Mammary epithelial cell (primary cell): ENCODE measurements at regions of chr12 and their contacts with region 1.

Region 1: GRCh38 chr12:26126340-26127284 is 1.8 kb upstream of the BHLHE41 start:
- DNase-seq: peak; percentile 89
- H3K4me3 ChIP-seq: peak overlapping the region; percentile 63 to 90 (median 88)
- H3K27ac ChIP-seq: peak overlapping the region; percentile 94
- H3K4me1 ChIP-seq: peaks cover 25% of the 10 kb centered on the region
- H3K27me3 ChIP-seq: no peaks in the 10 kb centered on the region
- CTCF ChIP-seq: peak in 1 of 2 donors; percentile 24

Region 2: DNA sequence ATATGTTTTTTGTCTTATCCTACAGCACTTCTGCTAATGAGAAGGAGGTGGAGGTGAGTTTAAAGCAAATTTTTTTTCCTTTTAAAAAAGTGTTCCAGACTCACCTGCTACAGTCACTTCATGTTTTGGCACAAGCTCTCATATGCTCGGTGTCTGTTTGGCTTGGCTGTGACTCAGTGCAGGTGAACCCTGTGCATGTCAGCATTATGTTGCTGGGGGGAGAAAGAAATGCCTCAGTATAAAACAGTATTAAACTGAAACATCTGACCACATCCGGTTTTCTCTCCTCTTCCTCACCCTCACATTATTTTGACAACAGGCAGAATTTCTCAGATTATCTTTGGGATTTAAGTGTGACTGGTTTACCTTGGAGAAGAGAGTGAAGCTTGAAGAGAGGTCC is 1036.9 kb before region 1 on chr12:
- CTCF ChIA-PET with region 1: no interaction called
- dilution Hi-C with region 1: no loop called
- in situ Hi-C with region 1: no loop called
- intact Hi-C with region 1: no loop called
- DNase-seq: peak; percentile 73
- H3K4me3 ChIP-seq: no peak overlapping the region
- H3K27ac ChIP-seq: no peak overlapping the region
- H3K4me1 ChIP-seq: peaks cover 9% of the 10 kb centered on the region
- H3K27me3 ChIP-seq: no peaks in the 10 kb centered on the region
- CTCF ChIP-seq: no peak

Region 3: DNA sequence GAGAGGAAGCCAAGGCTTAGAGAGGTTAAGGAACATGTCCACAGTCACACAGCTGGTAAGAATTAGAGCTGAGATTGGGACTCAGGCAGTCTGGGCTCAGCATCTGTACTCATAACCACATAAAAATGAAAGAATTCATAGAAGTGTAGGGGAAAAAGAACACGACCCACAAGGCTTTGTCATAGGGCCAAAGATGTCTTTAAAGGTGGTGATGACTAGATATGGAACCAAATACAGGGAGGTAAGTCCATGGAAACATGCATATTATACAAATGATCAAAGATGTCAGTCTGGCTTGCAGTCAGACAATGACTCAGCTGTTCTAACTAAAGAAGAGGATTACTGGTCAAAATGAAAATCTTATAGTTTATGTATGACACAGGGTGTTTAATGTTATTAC is 61.5 kb after region 1 on chr12:
- CTCF ChIA-PET with region 1: no interaction called
- dilution Hi-C with region 1: no loop called
- in situ Hi-C with region 1: no loop called
- intact Hi-C with region 1: loop called (anchors 5 kb)
- DNase-seq: peak; percentile 74
- H3K4me3 ChIP-seq: no peak overlapping the region
- H3K27ac ChIP-seq: peak overlapping the region; percentile 41
- H3K4me1 ChIP-seq: peaks cover 33% of the 10 kb centered on the region
- H3K27me3 ChIP-seq: no peaks in the 10 kb centered on the region
- CTCF ChIP-seq: no peak

Region 4: DNA sequence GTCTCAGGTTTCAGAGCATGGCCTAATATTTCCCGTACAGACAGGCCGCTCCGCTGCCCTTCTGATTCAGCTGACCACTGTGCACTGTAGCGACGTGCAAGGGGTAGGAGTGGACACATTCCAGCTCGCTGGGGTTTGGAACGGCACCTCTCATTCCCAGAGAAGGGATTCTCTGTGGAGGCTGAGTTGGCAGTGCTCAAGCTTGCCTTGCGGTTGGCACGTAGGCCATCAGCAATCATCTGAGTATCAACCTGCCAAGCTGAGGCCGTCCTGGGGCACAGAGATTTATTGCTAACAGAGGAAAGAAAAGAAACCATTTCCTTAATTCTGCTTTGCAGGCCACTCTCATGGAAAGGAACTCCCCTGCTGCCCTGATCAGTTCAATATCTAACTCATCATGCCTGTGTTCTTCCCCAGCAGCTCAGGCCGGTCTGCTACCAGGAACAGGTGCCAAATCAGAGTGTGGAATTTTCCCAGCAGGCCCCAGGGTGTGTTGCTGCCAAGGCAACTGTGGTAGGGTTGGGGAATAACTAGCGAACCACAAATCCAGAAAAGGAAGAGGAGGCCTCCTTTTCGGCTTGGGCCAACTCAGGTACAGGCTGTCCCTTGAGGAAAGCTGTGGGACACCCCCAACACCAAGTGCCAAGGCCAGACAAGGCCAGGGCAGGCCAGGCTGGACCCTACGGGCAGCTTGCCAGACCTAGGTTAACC is 161.2 kb after region 1 on chr12:
- CTCF ChIA-PET with region 1: no interaction called
- dilution Hi-C with region 1: loop called (anchors 5 kb)
- in situ Hi-C with region 1: loop called in 1 of 2 experiments (anchors 10 kb)
- intact Hi-C with region 1: no loop called
- DNase-seq: peak; percentile 99
- H3K4me3 ChIP-seq: no peak overlapping the region
- H3K27ac ChIP-seq: peak overlapping the region; percentile 96
- H3K4me1 ChIP-seq: peaks cover 44% of the 10 kb centered on the region
- H3K27me3 ChIP-seq: no peaks in the 10 kb centered on the region
- CTCF ChIP-seq: no peak

Region 5: DNA sequence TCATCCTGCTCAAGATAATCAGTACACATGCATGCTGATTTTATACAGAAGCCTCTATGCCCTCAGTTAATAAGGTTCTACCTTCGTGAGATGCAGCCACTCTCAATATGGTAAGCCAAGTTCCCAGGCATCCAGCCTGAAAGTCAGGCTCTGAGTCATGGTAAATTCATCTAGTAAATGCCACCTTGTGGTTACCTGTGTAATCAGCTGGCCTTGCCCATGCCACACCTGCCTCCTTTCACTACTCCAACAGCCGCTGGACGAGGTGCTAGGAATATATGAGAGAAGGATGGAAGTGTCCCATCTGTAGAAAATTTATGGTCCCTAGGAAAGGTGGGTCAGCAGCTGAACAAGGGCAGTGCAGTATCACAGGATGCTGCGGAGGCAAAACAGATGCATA is 276.0 kb after region 1 on chr12:
- CTCF ChIA-PET with region 1: interaction called, 4 read pairs
- dilution Hi-C with region 1: no loop called
- in situ Hi-C with region 1: no loop called
- intact Hi-C with region 1: loop called (anchors 1 kb)
- DNase-seq: peak; percentile 94
- H3K4me3 ChIP-seq: no peak overlapping the region
- H3K27ac ChIP-seq: no peak overlapping the region
- H3K4me1 ChIP-seq: peaks cover 14% of the 10 kb centered on the region
- H3K27me3 ChIP-seq: no peaks in the 10 kb centered on the region
- CTCF ChIP-seq: peak; percentile 39 to 57

Region 6: GRCh38 chr12:26614020-26614616 is 487.5 kb after region 1 on chr12:
- CTCF ChIA-PET with region 1: no interaction called
- dilution Hi-C with region 1: no loop called
- in situ Hi-C with region 1: no loop called
- intact Hi-C with region 1: loop called (anchors 1 kb)
- DNase-seq: no peak
- H3K4me3 ChIP-seq: no peak overlapping the region
- H3K27ac ChIP-seq: no peak overlapping the region
- H3K4me1 ChIP-seq: no peaks in the 10 kb centered on the region
- H3K27me3 ChIP-seq: no peaks in the 10 kb centered on the region
- CTCF ChIP-seq: peak; percentile 62 to 73

Region 7: DNA sequence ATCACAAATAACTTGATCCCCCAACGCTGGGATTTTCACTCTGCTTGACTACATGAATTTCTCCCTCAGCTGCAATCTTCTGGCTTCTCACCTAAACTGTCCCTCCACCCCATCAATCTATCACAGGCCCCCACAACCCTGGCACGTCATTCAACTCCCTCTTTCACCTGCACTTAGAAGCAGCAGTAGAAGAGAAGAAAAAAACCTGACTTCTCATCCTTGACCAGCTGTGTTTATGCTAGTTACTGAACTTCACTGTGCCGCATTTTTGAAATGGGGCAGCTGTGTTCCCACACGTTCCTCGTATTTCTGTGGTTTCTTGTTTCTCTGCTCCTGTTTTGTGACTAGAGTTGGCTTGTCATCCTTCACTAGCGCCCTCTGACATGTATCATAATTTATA is 671.4 kb after region 1 on chr12:
- CTCF ChIA-PET with region 1: no interaction called
- dilution Hi-C with region 1: no loop called
- in situ Hi-C with region 1: no loop called
- intact Hi-C with region 1: no loop called
- DNase-seq: peak; percentile 63
- H3K4me3 ChIP-seq: no peak overlapping the region
- H3K27ac ChIP-seq: no peak overlapping the region
- H3K4me1 ChIP-seq: no peaks in the 10 kb centered on the region
- H3K27me3 ChIP-seq: no peaks in the 10 kb centered on the region
- CTCF ChIP-seq: no peak

Region 8: GRCh38 chr12:26832822-26833742 is 706.5 kb after region 1 on chr12 and contains the start of gene ITPR2:
- CTCF ChIA-PET with region 1: no interaction called
- dilution Hi-C with region 1: no loop called
- in situ Hi-C with region 1: no loop called
- intact Hi-C with region 1: loop called (anchors 10 kb)
- DNase-seq: peak; percentile 95
- H3K4me3 ChIP-seq: peak within 1 kb of the TSS; percentile 92 to 97 (median 97)
- H3K27ac ChIP-seq: peak within 1 kb of the TSS; percentile 89
- H3K4me1 ChIP-seq: peaks cover 15% of the 10 kb centered on the region
- H3K27me3 ChIP-seq: no peaks in the 10 kb centered on the region
- CTCF ChIP-seq: peak in 1 of 2 donors; percentile 31
- total RNA-seq, gene ITPR2: 20.5 to 25.6 TPM